Common myeloid progenitor, CD34-positive (primary cell): ENCODE measurements at regions of chr5 and their contacts with region 1.

Region 1: DNA sequence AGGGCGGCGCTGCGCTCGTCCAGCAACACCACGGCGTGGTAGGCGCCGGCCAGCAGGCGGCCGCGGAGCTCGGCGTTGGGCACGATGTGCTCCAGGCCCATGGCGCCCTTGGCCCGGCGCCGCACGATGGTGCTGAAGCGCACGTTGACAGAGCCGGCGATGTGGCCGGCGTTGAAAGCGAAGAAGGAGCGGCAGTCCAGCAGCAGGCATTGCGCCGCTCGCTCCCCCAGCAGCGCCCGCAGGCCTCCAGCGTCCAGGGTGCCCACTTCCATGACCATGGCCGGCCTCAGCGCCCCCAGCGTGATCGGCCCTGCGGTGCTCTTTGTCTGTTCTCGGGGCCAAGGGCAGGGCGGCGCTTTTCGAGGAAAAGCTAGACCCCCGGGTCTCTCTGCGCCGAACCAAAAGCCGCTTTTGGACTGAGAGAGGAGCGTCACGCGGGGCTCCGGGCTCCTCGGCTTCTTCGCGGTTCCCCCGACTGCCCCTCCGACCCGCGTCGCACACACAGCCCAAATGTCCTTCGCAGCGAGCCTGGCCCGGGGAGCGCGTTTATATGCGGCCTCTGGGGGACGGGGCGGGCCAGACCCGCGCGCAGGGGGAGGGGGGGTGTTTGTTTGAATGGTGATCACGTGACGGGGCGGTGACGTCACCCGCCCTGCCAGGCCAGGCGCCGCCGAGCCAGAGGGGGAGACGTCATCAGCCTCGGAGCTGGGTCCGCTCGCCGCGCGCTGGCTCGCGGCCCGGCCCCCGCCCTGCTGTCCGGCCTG is at the start of gene DUSP1:
- DNase-seq: peak; percentile 95 to 98 (median 98)
- H3K4me3 ChIP-seq: peak within 1 kb of the TSS; percentile 86 to 99 (median 95)
- H3K27ac ChIP-seq: peak within 1 kb of the TSS; percentile 98 to 99
- H3K4me1 ChIP-seq: peaks cover 17 to 81% (median 70%) of the 10 kb centered on the region in 4 experiments
- H3K27me3 ChIP-seq: no peaks in the 10 kb centered on the region

Region 2: GRCh38 chr5:172607213-172607793 is 163.6 kb before region 1 on chr5:
- CTCF ChIA-PET with region 1: no interaction called
- POLR2A ChIA-PET with region 1: no interaction called
- DNase-seq: no peak
- H3K4me3 ChIP-seq: no peak overlapping the region
- H3K27ac ChIP-seq: no peak overlapping the region
- H3K4me1 ChIP-seq: no peaks in the 10 kb centered on the region
- H3K27me3 ChIP-seq: no peaks in the 10 kb centered on the region

Region 3: DNA sequence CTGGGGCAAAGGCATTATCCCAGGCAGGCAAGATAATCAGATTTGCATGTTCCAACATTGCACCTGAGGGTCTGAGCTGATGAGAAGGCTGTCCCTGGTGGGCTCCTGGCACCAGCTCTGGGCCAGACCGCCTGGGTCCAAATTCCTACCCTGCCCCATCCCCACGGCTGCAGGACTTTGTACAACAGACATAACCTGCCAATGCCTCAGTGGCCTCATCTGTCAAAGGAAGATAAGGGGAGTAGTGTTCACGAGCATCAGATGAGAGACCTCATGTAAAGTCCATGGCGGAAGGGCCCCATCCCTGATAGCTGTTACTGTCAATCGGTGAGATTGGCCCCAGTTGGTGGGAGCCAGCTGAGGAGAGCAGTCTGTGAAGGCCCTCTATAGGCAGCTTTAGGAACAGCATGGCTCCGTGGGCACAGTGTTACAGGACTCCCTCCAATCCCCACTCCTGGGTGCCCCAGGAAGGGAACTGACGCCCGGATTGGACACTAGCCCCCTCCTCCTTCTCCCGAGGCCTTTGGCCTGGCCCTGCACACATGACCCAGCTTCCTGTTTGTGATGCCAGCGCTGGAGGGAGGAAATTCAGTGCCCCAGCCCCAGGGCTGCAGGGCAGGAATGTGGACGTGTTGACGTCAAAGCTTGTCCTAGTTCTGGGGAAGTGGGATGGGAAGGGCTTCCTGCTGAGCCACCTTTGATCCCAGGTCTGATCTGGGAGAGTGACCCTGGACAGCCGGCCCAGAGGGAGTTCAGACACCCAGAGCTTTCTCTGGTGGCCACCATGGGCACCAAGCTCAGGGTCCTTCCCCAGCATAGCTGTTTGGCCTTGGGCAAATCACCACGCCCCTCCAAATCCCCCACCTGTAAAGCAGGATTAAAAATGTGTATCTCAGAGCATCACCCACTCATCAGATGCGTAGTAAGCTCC is 56.1 kb before region 1 on chr5:
- CTCF ChIA-PET with region 1: interaction called, 15 read pairs
- POLR2A ChIA-PET with region 1: interaction called, 20 read pairs
- DNase-seq: peak; percentile 64 to 75 (median 66)
- H3K4me3 ChIP-seq: no peak overlapping the region
- H3K27ac ChIP-seq: no peak overlapping the region
- H3K4me1 ChIP-seq: peaks cover 0 to 15% (median 5%) of the 10 kb centered on the region in 4 experiments
- H3K27me3 ChIP-seq: no peaks in the 10 kb centered on the region

Region 4: GRCh38 chr5:172736508-172737135 is 34.2 kb before region 1 on chr5:
- CTCF ChIA-PET with region 1: no interaction called
- POLR2A ChIA-PET with region 1: no interaction called
- DNase-seq: no peak
- H3K4me3 ChIP-seq: no peak overlapping the region
- H3K27ac ChIP-seq: no peak overlapping the region
- H3K4me1 ChIP-seq: peaks cover 0 to 2% (median 0%) of the 10 kb centered on the region in 4 experiments
- H3K27me3 ChIP-seq: no peaks in the 10 kb centered on the region

Region 5: DNA sequence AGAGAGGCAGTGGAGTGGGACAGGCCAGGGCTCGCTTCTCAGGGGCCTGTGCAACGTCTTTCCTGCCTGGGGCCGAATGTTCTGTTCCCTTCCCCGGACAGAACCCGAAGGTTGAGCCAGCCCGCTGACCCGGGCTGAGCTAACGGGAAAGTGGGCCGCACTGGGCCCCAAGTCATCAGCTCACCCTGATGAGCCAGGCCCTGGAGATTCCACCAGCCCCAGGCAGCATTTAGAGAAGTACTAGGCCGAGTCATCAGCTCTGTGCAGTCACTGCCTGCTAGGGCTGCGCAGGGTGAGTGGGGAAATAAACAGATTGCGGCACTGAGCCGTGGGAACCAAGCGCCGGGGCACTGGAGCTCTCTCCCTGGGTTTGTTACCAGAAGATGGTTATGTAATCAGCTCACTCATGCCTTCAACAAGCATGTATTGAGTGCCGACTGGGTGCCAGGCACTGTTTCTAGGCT is 29.3 kb after region 1 on chr5:
- CTCF ChIA-PET with region 1: interaction called, 7 read pairs
- POLR2A ChIA-PET with region 1: interaction called, 11 read pairs
- DNase-seq: peak in 2 of 3 donors; percentile 68 to 74
- H3K4me3 ChIP-seq: no peak overlapping the region
- H3K27ac ChIP-seq: no peak overlapping the region
- H3K4me1 ChIP-seq: peaks cover 0 to 49% (median 5%) of the 10 kb centered on the region in 4 experiments
- H3K27me3 ChIP-seq: no peaks in the 10 kb centered on the region

Region 6: DNA sequence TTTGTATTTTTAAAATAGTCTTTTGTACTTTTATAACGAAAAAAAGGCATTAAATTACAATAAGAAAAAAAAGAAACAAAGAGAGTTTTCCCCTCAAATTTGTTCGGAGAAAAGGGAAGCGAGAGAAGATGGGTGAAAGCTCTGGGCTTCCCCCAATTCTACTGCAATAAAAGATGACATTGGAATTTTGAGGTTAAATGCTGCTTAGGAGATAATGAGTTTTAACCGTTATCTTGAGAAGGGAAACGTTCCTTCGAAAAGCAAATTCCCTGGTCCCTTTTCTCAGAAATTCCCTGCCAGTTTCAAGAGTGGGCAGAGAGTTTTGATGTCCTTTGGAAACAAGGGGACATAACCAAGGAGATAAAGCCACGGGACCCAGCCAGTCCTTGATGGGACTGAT is 44.8 kb after region 1 on chr5:
- CTCF ChIA-PET with region 1: no interaction called
- POLR2A ChIA-PET with region 1: no interaction called
- DNase-seq: no peak
- H3K4me3 ChIP-seq: no peak overlapping the region
- H3K27ac ChIP-seq: no peak overlapping the region
- H3K4me1 ChIP-seq: no peaks in the 10 kb centered on the region
- H3K27me3 ChIP-seq: no peaks in the 10 kb centered on the region

Region 7: GRCh38 chr5:172839669-172840431 is 69.0 kb after region 1 on chr5:
- CTCF ChIA-PET with region 1: interaction called, 66 read pairs
- POLR2A ChIA-PET with region 1: interaction called, 37 read pairs
- DNase-seq: no peak
- H3K4me3 ChIP-seq: peak overlapping the region in 1 of 7 experiments; percentile 23
- H3K27ac ChIP-seq: no peak overlapping the region
- H3K4me1 ChIP-seq: peaks cover 14 to 95% (median 71%) of the 10 kb centered on the region in 4 experiments
- H3K27me3 ChIP-seq: no peaks in the 10 kb centered on the region

Region 8: DNA sequence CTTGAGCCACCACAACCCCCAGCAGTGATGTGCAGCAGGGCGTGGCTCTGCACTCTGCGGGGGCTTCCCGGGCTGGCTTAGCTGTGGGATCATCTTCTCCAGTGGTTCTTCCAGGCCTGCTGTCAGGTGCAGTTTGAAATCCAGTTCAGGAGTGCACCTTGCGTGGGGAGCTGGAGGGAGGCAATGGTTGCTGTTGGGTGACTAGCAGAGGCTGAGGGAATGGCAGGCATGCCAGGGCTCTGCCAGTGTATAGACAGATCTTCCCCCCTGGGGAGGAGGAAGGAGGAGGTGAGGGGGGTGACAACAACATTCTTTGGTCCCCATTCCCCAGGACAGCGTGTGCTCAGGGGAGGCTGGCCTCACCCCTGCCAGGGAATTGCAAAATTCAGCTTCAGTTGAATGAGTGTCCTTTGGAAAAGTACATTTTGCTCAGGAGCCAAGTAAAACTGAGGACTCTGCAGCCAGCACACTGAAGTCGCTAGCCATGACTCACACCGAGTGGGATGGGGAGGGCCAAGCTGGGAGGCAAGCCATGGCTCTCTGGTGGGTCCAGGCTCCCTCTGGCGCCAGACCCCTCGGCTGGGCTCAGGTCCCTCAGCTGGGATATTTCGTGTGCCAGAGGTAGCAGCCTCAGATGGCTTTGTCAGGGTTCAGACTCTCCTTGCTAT is 98.2 kb after region 1 on chr5:
- CTCF ChIA-PET with region 1: interaction called, 3 read pairs
- POLR2A ChIA-PET with region 1: interaction called, 20 read pairs
- DNase-seq: peak in 1 of 3 donors; percentile 40
- H3K4me3 ChIP-seq: peak overlapping the region in 1 of 7 experiments; percentile 4
- H3K27ac ChIP-seq: peak overlapping the region in 1 of 2 experiments; percentile 3
- H3K4me1 ChIP-seq: peaks cover 9 to 64% (median 55%) of the 10 kb centered on the region in 4 experiments
- H3K27me3 ChIP-seq: no peaks in the 10 kb centered on the region